ENCODE measurements at regions of chr1 and their contacts with region 1.

Region 1: DNA sequence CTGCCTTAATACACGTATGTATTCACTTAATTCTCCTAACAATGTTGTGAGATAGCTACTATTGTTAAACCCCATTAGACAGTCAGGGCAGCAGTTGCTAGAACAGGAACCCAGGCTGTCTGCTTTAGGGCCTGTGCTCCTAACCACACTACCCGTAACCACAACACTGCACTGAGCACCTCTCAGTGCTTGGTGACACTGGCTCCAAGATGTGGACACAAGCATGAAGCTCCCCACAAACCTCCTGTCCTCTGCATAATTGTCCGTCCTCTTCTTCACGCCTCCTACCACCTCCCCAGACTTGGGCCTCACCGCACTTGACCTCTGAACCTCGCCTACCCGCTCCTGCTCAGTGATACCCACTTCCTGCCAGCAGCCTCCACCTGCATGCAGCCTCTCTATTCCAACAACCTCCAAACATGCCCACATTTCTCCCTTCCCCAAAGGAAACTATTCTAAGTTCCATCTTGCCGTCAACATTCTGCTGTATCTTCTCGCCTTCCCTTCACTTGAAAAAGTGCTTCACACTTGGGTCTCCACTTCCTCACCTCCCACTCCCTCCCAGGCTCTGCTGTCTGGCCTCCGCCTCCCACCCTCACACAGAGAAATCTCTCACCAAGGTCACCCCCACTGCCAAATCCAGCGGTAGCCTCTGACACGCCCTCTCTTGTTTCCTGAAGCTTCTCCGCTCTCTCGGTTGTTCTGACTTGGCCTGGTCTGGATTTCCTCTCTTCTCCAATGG is 14.6 kb upstream of the AHDC1 start:
- DNase-seq: peak; percentile 73
- H3K4me3 Mint-ChIP-seq: no peak overlapping the region
- H3K27ac Mint-ChIP-seq: peak overlapping the region; percentile 82
- H3K4me1 Mint-ChIP-seq: peaks cover 50% of the 10 kb centered on the region
- H3K27me3 Mint-ChIP-seq: no peaks in the 10 kb centered on the region

Region 2: DNA sequence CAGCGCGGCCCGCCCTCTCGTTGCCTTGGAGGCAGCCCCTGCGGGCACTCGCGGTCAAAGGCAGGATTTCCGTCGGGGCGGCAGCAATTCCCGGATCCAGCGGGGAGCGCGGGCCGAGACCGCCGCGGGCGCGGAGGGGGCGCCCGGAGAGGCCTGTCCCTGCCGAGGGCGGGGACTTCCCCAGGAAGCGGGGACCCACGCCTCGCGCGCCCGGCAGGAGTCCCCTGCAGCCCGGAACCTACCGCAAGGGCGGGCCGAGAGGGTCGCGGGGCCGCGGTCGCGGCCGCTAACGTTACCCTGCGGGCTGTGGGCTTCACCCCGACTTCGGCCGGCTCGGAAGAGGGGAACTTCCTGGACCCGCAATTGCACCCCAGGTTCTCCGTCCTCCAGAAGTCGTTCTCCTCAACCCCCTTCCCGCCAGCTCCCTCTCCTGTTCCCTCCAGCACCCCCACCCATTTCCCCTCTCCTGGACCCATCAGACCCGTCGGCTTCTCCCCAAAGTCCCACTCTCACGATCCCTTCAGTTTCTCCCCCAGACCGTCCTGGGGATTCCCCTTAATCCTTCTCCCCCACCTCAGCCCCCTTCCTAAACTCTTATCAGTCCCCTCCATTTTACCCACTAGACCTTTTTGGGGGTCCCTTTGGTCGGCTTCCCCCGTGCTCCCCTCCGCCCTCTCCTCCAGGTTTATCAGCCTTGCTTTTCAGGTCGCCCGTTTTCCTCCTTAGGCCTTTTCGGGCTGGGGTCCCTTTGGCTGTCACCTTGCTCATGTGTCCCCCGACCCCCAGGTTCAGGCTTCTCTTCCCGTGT is 15.9 kb after region 1 on chr1:
- CTCF ChIA-PET with region 1: interaction called, 4 read pairs
- POLR2A ChIA-PET with region 1: interaction called, 22 read pairs
- DNase-seq: peak; percentile 54
- H3K4me3 Mint-ChIP-seq: peak overlapping the region; percentile 29
- H3K27ac Mint-ChIP-seq: no peak overlapping the region
- H3K4me1 Mint-ChIP-seq: peaks cover 66% of the 10 kb centered on the region
- H3K27me3 Mint-ChIP-seq: peaks cover 2% of the 10 kb centered on the region